HepG2 (cell line): ENCODE measurements at regions of chr5 and their contacts with region 1.

Region 1: DNA sequence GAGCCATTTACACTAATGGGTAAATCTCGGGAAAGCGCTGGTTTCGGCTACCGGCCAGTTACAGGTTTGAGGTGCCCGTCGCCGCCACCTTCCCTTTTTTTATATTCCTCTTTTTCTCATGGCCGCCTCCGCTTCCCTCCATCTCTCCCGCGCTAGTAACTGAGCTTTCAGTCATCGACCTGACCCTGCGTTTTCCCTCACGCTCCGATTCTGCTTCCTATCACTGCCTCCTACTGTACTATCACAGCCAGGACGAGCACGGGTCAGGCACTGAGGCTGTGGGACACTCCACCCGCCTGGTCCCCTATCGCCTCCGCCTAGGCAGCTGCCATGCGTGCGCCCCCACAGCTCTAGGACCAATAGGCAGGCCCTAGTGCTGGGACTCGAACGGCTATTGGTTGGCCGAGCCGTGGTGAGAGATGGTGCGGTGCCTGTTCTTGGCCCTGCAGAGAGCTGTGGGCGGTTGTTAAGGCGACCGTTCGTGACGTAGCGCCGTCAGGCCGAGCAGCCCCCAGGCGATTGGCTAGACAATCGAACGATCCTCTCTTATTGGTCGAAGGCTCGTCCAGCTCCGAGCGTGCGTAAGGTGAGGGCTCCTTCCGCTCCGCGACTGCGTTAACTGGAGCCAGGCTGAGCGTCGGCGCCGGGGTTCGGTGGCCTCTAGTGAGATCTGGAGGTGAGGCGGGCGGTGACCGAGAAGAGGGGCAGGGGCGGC is at the start of gene HMGCR:
- DNase-seq: peak; percentile 99
- ATAC-seq: peak; percentile 97
- H3K4me3 ChIP-seq: peak within 1 kb of the TSS; percentile 90 to 98 (median 96)
- H3K27ac ChIP-seq: peak within 1 kb of the TSS; percentile 92
- H3K4me1 ChIP-seq: peaks cover 53% of the 10 kb centered on the region
- H3K27me3 ChIP-seq: no peaks in the 10 kb centered on the region; a peak in 1 of 5 replicates
- CTCF ChIP-seq: peak; percentile 89
- EP300 ChIP-seq: peak; percentile 46 to 72; a peak in 3 of 4 replicates
- POLR2A ChIP-seq: peak; percentile 94 to 96
- RAD21 ChIP-seq: peak; percentile 83
- total RNA-seq, gene HMGCR: 111 and 144 TPM in 2 replicates

Region 2: DNA sequence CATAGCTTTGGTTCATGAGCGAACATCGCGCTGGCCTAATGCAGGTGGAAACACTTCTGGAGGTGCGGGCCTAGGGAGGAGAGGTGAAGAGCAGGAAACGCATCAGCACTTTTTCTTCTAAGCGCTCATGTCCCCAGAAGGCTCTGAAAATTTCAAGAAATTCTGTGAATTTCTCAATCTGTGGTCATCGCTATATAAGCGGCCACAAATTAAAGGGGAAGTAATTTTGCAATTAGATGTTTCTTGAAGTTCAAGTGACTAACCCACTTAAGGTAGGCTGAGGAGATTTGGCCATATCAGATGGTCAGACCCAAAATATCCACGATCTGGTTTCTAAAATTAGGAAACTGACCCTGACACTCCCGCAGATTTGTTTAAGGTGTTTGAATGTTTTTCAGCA is 16.4 kb before region 1 on chr5:
- CTCF ChIA-PET with region 1: no interaction called
- POLR2A ChIA-PET with region 1: interaction called, 11 read pairs
- in situ Hi-C with region 1: no loop called
- intact Hi-C with region 1: no loop called
- DNase-seq: no peak
- ATAC-seq: no peak
- H3K4me3 ChIP-seq: no peak overlapping the region; a peak in 1 of 6 replicates
- H3K27ac ChIP-seq: no peak overlapping the region
- H3K4me1 ChIP-seq: peaks cover 45% of the 10 kb centered on the region
- H3K27me3 ChIP-seq: no peaks in the 10 kb centered on the region
- CTCF ChIP-seq: no peak
- EP300 ChIP-seq: no peak
- POLR2A ChIP-seq: no peak
- RAD21 ChIP-seq: no peak